ENCODE measurements at regions of chr5 and their contacts with region 1.

Region 1: GRCh38 chr5:6979061-6979460 is 265.8 kb downstream of the TENT4A start:
- DNase-seq: no peak
- H3K4me3 ChIP-seq: no peak overlapping the region
- H3K27ac ChIP-seq: no peak overlapping the region
- H3K4me1 ChIP-seq: no peaks in the 10 kb centered on the region
- H3K27me3 ChIP-seq: peaks cover 0 to 3% of the 10 kb centered on the region in 2 donors
- CTCF ChIP-seq: no peak
- POLR2A ChIP-seq: no peak

Region 2: GRCh38 chr5:6856653-6857052 is 122.4 kb before region 1 on chr5:
- intact Hi-C with region 1: no loop called
- DNase-seq: no peak
- H3K4me3 ChIP-seq: no peak overlapping the region
- H3K27ac ChIP-seq: no peak overlapping the region
- H3K4me1 ChIP-seq: no peaks in the 10 kb centered on the region
- H3K27me3 ChIP-seq: no peaks in the 10 kb centered on the region
- CTCF ChIP-seq: no peak
- POLR2A ChIP-seq: no peak

Region 3: DNA sequence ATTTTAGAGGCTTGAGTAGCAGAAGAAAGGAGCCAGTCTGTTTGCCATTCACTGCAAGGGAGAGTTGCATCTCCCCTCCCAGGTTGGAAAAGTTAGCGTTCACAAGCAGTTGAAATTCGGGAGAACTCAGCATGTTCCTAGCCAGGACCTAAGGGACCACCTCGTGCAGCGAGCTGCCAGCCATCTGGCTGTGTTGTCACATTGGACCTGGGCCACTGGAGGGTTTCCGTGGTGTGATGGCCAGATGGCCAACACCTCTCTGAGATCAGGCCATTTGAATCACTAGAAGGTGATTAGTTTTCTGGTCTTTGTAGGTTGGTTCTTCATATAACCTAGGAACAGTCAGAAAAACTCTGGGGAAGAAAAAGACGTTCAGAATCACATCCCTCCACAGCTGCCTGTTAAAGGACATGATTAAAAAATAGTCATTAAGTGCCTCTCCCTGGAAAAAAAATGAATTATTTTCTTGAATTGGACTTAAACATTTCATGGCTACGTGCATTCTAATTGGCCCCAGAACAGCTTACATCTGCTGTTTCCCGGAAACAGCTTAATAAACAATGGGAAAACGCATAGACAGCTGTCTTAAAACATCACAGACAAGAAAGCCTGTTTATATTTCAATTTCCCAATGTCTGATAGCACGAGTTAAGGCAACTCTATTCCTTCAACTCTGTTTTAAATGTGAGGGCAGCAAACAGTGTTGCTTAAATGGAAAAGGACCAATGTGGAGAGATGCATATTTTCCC is 38.1 kb after region 1 on chr5:
- intact Hi-C with region 1: loop called (anchors 2 kb)
- DNase-seq: no peak
- H3K4me3 ChIP-seq: no peak overlapping the region
- H3K27ac ChIP-seq: no peak overlapping the region
- H3K4me1 ChIP-seq: no peaks in the 10 kb centered on the region
- H3K27me3 ChIP-seq: no peaks in the 10 kb centered on the region
- CTCF ChIP-seq: no peak
- POLR2A ChIP-seq: no peak